H1 (cell line): ENCODE measurements at regions of chr15 and their contacts with region 1.

Region 1: DNA sequence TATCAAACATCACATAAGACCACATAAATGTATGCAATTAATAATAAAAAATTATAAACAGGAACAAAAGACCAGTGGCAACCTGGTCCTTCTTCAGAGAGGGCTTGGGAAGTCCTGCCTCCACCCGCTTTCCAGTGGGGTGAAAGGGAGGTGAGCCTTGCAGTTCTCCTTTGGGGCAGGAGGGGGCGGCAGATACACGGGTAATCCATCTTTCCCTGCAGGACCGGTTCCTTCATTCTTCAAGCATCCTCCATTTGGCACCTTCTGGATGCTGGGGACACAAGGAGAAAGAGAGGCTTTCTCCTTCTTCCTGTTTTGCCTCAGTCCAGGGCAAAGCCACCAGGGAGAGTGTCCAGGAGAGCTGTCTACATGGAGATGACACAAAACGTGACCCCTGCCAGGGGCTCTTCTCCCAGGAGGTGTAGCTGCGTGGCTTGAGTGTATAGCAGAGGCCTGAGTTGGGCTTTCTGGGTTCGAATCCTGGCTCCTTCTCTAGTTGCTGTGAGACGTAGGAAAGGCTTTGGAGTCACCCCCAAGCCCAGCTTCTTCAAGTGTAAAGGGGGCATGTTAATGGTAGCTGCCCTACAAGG is 23.2 kb downstream of the RPLP1 start:
- DNase-seq: peak; percentile 51 to 95
- H3K4me3 ChIP-seq: no peak overlapping the region
- H3K27ac ChIP-seq: no peak overlapping the region
- H3K4me1 ChIP-seq: no peaks in the 10 kb centered on the region
- H3K27me3 ChIP-seq: no peaks in the 10 kb centered on the region
- CTCF ChIP-seq: peak; percentile 83 to 96 (median 96)
- EP300 ChIP-seq: no peak
- POLR2A ChIP-seq: no peak
- RAD21 ChIP-seq: peak; percentile 95 to 96

Region 2: GRCh38 chr15:69346112-69346511 is 129.8 kb before region 1 on chr15:
- CTCF ChIA-PET with region 1: no interaction called
- POLR2A ChIA-PET with region 1: no interaction called
- DNase-seq: no peak
- H3K4me3 ChIP-seq: no peak overlapping the region
- H3K27ac ChIP-seq: no peak overlapping the region
- H3K4me1 ChIP-seq: peaks cover 11 to 20% (median 14%) of the 10 kb centered on the region in 4 experiments
- H3K27me3 ChIP-seq: no peaks in the 10 kb centered on the region
- CTCF ChIP-seq: no peak
- EP300 ChIP-seq: no peak
- POLR2A ChIP-seq: no peak
- RAD21 ChIP-seq: no peak

Region 3: DNA sequence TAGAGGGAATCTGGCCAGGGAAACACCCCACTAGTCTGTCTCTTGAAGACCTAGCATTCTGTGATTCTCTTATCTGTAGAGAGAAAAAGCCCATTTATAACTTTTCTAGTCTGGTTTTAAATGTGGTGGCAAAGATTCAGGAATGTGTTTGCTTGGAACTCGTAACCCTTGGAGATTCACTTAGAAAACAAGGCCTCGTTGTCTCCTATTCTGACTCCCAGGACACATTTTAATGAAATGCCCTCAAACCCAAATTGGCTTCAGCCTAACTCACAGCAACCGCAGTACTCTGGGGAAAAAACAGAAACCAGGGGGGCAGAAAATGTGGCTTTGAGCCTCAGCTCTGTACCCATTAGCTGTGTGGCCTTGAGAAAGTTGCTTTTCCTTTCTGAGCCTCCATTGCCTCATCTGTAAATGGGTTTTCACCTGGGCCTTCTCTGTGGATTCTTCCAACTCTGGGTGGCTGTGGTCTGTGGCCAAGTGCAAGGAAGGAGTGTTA is 13.3 kb after region 1 on chr15:
- CTCF ChIA-PET with region 1: interaction called, 15 read pairs
- POLR2A ChIA-PET with region 1: no interaction called
- DNase-seq: no peak
- H3K4me3 ChIP-seq: no peak overlapping the region
- H3K27ac ChIP-seq: no peak overlapping the region
- H3K4me1 ChIP-seq: no peaks in the 10 kb centered on the region
- H3K27me3 ChIP-seq: no peaks in the 10 kb centered on the region
- CTCF ChIP-seq: no peak
- EP300 ChIP-seq: no peak
- POLR2A ChIP-seq: no peak
- RAD21 ChIP-seq: no peak

Region 4: DNA sequence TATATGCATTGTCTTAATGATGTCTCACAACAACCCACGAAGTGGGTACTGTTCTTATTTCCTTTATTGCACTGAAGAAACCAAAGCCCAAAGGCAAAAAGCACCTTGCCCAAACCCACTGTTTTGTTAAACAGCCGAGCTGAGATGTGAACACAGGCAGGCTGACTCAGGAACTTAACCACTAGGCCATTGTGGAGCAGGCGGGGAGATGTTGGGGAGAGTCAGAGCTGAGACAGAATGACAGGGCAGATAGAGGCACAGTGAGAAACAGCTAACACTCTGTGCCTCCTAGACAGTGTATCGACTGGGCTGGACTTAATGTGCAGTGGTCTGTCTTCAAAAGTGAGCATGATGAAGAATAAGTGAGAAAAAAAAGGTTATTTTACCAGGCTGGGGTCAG is 33.3 kb after region 1 on chr15:
- CTCF ChIA-PET with region 1: interaction called, 49 read pairs
- POLR2A ChIA-PET with region 1: no interaction called
- DNase-seq: no peak
- H3K4me3 ChIP-seq: no peak overlapping the region
- H3K27ac ChIP-seq: no peak overlapping the region
- H3K4me1 ChIP-seq: no peaks in the 10 kb centered on the region
- H3K27me3 ChIP-seq: no peaks in the 10 kb centered on the region
- CTCF ChIP-seq: no peak
- EP300 ChIP-seq: no peak
- POLR2A ChIP-seq: no peak
- RAD21 ChIP-seq: no peak

Region 5: DNA sequence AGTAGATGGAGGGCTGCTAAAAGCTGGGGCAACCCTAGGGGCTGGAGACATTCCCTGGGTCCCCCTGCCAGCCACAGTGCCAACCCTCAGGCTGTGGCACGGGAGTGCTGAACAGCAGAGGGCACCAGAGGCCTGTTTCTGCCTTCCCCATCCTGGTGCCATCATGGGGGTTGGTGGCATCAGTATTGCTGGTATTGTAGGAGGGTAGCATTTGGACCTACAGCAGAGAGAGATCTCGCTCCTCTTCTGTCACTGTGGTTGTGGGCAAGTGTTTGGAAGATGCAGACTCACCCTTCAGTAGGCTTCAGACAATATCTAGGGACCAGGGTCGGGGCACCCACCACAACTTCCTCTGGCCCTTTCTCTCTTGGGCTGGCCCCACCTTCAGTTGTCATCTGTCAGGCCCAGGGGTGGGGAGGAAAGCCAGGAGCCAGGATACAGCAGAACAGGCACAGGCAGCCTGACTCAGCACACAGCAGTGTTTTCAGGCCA is 100.2 kb after region 1 on chr15:
- CTCF ChIA-PET with region 1: interaction called, 34 read pairs
- POLR2A ChIA-PET with region 1: no interaction called
- DNase-seq: peak in 1 of 2 experiments; percentile 72
- H3K4me3 ChIP-seq: no peak overlapping the region
- H3K27ac ChIP-seq: 0 out of 2 replicates have a peak overlapping the region, but pooled peaks have one; percentile 22
- H3K4me1 ChIP-seq: peaks cover 0 to 3% (median under 1%) of the 10 kb centered on the region in 4 experiments; a peak in 2 of 7 replicates
- H3K27me3 ChIP-seq: no peaks in the 10 kb centered on the region
- CTCF ChIP-seq: peak; percentile 82 to 92 (median 88)
- EP300 ChIP-seq: no peak
- POLR2A ChIP-seq: no peak
- RAD21 ChIP-seq: peak; percentile 87 to 93

Region 6: DNA sequence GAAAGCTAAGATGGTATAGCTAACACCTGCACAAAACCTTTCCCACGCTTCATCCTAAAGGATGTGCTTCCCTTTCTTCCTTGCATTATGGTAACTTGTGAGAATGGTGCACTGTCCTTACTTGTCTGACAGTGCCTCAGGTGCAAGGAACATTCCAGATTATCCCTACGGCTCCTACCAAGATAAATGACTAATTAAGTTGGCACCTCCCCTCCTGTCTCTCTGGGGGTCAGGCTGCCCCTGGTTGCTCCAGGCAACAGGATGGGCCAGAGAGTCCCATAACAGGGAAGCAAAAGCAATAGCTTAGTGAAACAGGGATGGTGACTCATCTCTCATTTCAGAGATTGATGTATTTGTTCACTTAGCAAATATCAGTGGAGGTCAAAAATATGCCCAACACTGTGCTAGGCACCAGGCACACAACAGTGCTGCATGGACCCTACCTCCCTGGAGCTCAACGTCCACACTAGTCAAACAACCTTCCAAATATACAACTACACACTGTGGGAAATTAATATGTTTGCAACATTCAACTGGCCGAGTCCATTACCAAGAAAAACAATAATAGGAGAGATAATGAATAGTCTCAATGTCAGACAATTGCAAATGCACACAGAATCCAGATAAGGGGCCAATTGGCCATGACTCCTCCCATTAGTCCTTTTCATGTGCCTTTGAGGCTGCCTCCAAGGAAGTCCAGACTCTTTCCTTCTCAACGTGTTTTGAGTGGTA is 372.8 kb after region 1 on chr15:
- CTCF ChIA-PET with region 1: no interaction called
- POLR2A ChIA-PET with region 1: no interaction called
- DNase-seq: no peak
- H3K4me3 ChIP-seq: no peak overlapping the region
- H3K27ac ChIP-seq: no peak overlapping the region
- H3K4me1 ChIP-seq: no peaks in the 10 kb centered on the region; a peak in 1 of 7 replicates
- H3K27me3 ChIP-seq: no peaks in the 10 kb centered on the region
- CTCF ChIP-seq: no peak
- EP300 ChIP-seq: no peak
- POLR2A ChIP-seq: no peak
- RAD21 ChIP-seq: no peak